Activated CD4-positive, alpha-beta T cell treated with anti-CD3 and anti-CD28 coated beads, Interleukin-2, amount 10 ng/mL, durations not matched to agents 24 days and 14 days (primary cell): ENCODE measurements at regions of chr1 and their contacts with region 1.

Region 1: DNA sequence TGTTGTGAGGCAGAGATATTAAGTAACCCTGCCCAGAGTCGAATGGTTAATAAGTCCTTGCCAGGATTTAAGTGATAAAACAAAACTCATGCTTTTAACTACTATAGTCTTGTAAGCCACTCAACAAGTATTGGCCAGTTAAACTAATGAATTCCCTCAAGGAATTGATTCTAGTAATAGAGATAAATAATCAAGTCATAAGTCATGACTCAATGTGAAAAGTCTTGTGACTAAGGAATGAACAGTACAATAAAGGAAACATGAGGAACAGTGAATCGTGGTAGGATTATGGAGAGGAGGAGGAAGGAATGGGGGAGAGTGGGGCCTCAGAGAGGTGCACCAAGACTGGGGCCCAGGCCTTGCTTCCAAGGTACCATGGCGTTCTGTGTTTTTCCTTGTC is 104.7 kb downstream of the FGGY start:
- DNase-seq: no peak
- H3K4me3 Mint-ChIP-seq: no peak overlapping the region
- H3K27ac Mint-ChIP-seq: no peak overlapping the region
- H3K4me1 Mint-ChIP-seq: peaks cover 4% of the 10 kb centered on the region
- H3K27me3 Mint-ChIP-seq: no peaks in the 10 kb centered on the region

Region 2: DNA sequence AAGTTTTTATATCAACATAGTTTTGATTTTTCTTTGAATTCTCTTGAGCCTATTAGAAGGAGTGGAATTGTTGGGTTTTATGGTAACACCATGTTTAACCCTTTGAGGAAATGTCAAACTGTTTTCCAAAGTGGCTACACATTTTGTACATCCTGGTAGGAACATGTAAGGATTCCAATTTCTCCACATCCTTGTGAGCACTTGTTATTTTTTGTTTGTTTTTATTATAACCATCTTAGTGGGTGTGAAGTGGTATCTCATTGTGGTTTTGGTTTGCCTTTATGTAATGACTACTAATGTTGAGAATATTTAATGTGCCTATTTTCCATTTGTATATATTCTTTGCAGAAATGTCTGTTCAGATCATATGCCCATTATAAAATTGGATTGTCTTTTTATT is 15.8 kb after region 1 on chr1:
- intact Hi-C with region 1: loop called (anchors 1 kb)
- DNase-seq: no peak
- H3K4me3 Mint-ChIP-seq: no peak overlapping the region
- H3K27ac Mint-ChIP-seq: no peak overlapping the region
- H3K4me1 Mint-ChIP-seq: no peaks in the 10 kb centered on the region
- H3K27me3 Mint-ChIP-seq: no peaks in the 10 kb centered on the region